Gastrocnemius medialis (tissue), 4 donors: ENCODE measurements at regions of chr10 and their contacts with region 1.

Region 1: DNA sequence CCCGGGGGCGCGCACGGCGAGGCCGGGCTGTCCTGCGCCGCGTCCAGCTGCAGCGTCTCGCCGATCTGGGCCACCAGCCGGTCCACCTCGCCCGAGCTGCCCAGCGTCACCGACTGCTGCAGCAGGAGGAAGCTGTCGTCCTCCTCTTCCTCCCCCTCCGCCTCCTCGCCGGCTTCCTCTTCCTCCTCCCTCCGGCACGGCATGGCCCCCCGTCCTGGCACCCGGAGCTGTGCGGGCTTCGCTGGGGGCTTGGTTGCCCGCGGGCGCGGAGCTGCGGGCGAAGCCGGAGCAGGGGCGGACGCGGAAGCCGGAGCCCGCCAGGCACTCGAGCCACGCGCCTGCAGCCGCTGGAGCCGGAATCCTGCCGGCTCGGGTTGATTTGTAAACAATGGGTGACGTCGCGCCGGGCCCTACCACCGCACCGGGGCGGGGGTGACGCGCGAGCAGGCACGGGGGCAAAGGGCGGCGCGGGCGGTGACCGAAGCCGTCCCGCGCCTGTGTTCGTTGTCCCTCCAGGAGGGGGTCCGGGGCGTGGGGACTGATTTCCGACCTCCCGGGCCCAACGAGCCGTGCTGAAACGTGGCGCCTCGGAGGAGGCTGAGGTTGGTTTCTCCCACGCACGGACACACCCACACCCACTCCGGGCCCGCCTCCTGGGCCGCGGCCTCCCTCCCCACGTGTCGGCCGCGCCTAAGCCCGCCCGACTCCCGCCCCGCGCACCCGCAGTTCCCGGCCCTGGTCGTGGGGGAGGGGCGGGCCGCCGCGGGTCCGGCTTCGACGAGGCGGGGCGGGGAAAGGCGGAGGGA is at the start of gene FRAT2:
- DNase-seq: peak; percentile 87 to 88
- ATAC-seq: peak; percentile 88 to 91
- H3K4me3 ChIP-seq: peak within 1 kb of the TSS; percentile 72 to 100 (median 88)
- H3K27ac ChIP-seq: peak within 1 kb of the TSS; percentile 83 to 98 (median 90)
- H3K4me1 ChIP-seq: peaks cover 36 to 43% of the 10 kb centered on the region in 2 donors
- H3K27me3 ChIP-seq: no peaks in the 10 kb centered on the region
- CTCF ChIP-seq: no peak
- POLR2A ChIP-seq: peak; percentile 80 to 92
- total RNA-seq, gene FRAT2: 9.3 to 28.7 (median 20.5) TPM

Region 2: DNA sequence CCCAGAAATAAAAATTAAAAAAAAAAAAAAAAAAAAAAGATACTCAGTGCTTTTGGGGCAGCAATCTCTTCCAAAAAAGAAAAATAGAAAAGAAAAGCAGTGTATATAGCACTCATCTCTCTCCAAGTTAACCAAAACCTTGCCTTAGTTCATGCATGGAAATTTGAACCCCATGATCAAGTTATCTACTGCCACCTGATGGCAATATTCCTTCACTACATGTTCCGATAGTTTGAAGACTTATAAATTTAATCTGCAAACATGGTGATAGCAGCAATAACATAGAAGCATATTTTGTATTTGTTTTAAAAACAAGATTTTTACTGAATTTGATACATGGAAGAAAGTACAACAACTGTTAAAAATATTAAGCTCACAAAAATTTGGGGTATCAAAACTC is 100.2 kb before region 1 on chr10:
- in situ Hi-C with region 1: no loop called
- intact Hi-C with region 1: no loop called
- DNase-seq: no peak
- ATAC-seq: no peak
- H3K4me3 ChIP-seq: no peak overlapping the region
- H3K27ac ChIP-seq: no peak overlapping the region
- H3K4me1 ChIP-seq: no peaks in the 10 kb centered on the region
- H3K27me3 ChIP-seq: no peaks in the 10 kb centered on the region
- CTCF ChIP-seq: peak in 3 of 5 experiments; percentile 22 to 51 (median 28)
- POLR2A ChIP-seq: no peak

Region 3: DNA sequence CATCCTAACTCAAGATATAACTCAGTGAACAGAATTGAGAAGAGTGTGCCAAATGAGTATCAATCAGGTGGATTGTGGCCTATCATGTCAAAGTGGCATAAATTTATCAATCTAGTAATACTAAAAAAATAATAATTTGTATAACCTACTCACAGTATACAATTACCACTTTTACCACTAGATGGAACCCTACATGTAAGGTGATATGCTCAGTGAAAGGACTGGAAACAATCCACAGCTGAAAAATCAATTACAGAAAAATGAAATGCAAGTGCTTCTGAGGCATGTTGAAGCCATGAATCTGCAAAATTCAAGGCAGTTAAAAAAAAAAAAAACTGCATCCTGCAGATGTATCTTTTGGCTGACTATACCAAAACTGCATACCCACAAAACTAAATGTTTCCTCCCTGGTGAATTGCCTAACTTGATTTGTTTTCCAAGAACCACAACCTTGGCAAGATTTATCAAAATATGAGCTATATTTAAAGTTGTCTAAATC is 56.0 kb before region 1 on chr10:
- in situ Hi-C with region 1: loop called in 2 of 4 experiments (anchors 5 to 10 kb)
- intact Hi-C with region 1: loop called (anchors 2 kb)
- DNase-seq: no peak
- ATAC-seq: peak; percentile 94 to 96
- H3K4me3 ChIP-seq: no peak overlapping the region
- H3K27ac ChIP-seq: peak overlapping the region; percentile 43 to 68 (median 52)
- H3K4me1 ChIP-seq: peaks cover 21% of the 10 kb centered on the region in 2 donors
- H3K27me3 ChIP-seq: no peaks in the 10 kb centered on the region
- CTCF ChIP-seq: peak; percentile 60 to 83 (median 71)
- POLR2A ChIP-seq: no peak

Region 4: GRCh38 chr10:97292097-97292862 is 42.3 kb before region 1 on chr10 and contains the start of gene ARHGAP19:
- in situ Hi-C with region 1: loop called in 1 of 4 experiments (anchors 10 kb)
- intact Hi-C with region 1: loop called (anchors 5 kb)
- DNase-seq: peak; percentile 97
- ATAC-seq: peak; percentile 100
- H3K4me3 ChIP-seq: peak within 1 kb of the TSS; percentile 79 to 97 (median 87)
- H3K27ac ChIP-seq: peak within 1 kb of the TSS; percentile 87 to 95 (median 88)
- H3K4me1 ChIP-seq: peaks cover 9 to 10% of the 10 kb centered on the region in 2 donors
- H3K27me3 ChIP-seq: no peaks in the 10 kb centered on the region
- CTCF ChIP-seq: no peak
- POLR2A ChIP-seq: peak; percentile 38 to 66
- total RNA-seq, gene ARHGAP19: 1.7 to 12.3 (median 2.4) TPM

Region 5: GRCh38 chr10:97318772-97319651 is 15.6 kb before region 1 on chr10 and contains the start of gene FRAT1:
- in situ Hi-C with region 1: no loop called
- intact Hi-C with region 1: loop called (anchors 1 kb)
- DNase-seq: peak; percentile 76 to 80
- ATAC-seq: peak; percentile 91 to 94
- H3K4me3 ChIP-seq: peak within 1 kb of the TSS; percentile 74 to 88 (median 79)
- H3K27ac ChIP-seq: peak within 1 kb of the TSS; percentile 93 to 97 (median 96)
- H3K4me1 ChIP-seq: peaks cover 18 to 19% of the 10 kb centered on the region in 2 donors
- H3K27me3 ChIP-seq: no peaks in the 10 kb centered on the region
- CTCF ChIP-seq: no peak
- POLR2A ChIP-seq: peak; percentile 81 to 92
- total RNA-seq, gene FRAT1: 1.7 to 7.6 (median 3.2) TPM

Region 6: DNA sequence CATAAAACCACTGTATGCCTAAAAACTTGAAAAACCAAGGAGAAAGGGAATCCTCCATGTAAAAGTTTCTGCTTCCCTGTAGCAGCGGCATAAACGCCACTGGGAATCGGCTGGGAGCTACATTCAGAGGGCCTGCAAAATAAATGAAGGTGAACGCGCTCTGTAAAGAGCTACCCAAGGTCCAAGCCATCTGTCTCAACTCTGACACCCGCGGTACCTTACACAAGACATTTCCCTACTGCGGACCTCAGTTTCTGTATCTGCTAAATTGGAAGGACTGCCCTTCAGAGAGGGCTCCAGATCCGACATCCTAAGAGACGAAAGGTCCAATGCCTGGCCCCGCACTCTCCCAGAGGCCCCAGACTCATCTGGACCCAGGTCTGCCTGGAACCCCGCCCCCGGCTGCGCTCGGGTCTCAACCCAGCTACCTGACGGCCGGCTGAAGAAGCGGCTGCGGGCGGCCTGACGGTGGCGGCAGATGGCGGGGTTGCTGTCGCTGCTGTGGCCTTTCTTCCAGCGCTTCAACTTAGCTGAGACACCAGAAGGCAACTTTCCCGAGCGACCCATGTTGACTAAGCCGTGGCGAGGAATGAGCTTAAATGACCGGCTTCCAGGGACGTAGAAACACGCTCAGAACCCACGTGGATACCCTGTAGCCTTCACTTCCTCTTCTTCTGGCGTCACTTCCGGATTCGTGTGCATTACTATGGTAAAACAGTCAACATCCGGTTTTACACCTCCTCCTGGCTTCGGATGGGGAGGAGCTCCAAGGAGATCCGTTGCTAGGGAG is 66.3 kb after region 1 on chr10 and contains the start of gene RRP12:
- in situ Hi-C with region 1: no loop called
- intact Hi-C with region 1: loop called (anchors 2 kb)
- DNase-seq: peak; percentile 87 to 88
- ATAC-seq: peak; percentile 97 to 99
- H3K4me3 ChIP-seq: peak within 1 kb of the TSS; percentile 72 to 97 (median 94)
- H3K27ac ChIP-seq: peak within 1 kb of the TSS; percentile 89 to 97 (median 94)
- H3K4me1 ChIP-seq: peaks cover 14 to 15% of the 10 kb centered on the region in 2 donors
- H3K27me3 ChIP-seq: no peaks in the 10 kb centered on the region
- CTCF ChIP-seq: no peak
- POLR2A ChIP-seq: peak; percentile 79
- total RNA-seq, gene RRP12: 41.9 to 61.4 (median 49.9) TPM